ENCODE measurements at regions of chr11 and their contacts with region 1.

Region 1: DNA sequence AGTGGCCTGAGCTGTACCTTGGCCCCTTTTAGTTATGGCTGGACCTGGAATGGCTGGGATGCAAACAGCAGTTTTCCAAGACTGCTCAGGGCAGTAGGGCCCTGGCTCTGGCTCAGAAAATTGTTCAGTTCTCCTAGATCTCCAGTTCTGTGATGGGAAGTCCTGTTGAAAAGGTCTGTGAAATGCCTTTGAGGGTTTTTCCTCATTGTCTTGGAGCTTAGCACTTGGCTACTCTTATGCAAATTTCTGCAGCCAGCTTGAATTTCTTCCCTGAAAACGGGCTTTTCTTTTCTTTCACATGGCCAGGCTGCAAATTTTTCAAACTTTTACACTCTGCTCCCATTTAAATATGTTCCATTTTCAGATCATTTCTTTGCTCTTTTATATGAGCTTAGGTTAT is 33.2 kb downstream of the OR4A15 start:
- DNase-seq: no peak
- ATAC-seq: no peak
- H3K4me3 ChIP-seq: no peak overlapping the region
- H3K27ac ChIP-seq: no peak overlapping the region
- H3K4me1 ChIP-seq: no peaks in the 10 kb centered on the region
- H3K27me3 ChIP-seq: no peaks in the 10 kb centered on the region
- CTCF ChIP-seq: no peak
- POLR2A ChIP-seq: no peak

Region 2: GRCh38 chr11:55349032-55349431 is 52.0 kb before region 1 on chr11:
- intact Hi-C with region 1: loop called in 1 of 10 experiments (anchors 10 kb)
- DNase-seq: no peak
- ATAC-seq: no peak
- H3K4me3 ChIP-seq: no peak overlapping the region
- H3K27ac ChIP-seq: no peak overlapping the region
- H3K4me1 ChIP-seq: no peaks in the 10 kb centered on the region
- H3K27me3 ChIP-seq: no peaks in the 10 kb centered on the region
- CTCF ChIP-seq: no peak
- POLR2A ChIP-seq: no peak

Region 3: DNA sequence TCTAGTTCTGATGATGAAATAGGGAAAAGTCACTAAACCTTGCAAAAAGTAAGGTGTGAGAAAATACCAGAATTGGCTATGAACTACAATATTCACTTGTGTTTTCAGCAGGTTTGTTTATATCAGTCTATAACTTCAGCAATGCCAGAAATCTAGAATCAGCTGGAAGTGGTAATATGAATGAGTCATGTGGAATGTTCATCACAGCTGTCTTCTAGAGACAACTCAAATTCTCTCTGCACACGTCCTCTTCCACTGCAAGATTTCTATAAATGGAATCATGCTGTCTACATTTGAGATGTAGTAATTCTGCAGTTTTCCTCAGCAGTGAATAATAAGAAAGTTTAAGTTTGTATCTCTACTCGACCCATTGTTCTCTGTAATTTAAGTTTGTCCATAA is 56.6 kb after region 1 on chr11:
- intact Hi-C with region 1: loop called in 1 of 10 experiments (anchors 10 kb)
- DNase-seq: no peak
- ATAC-seq: no peak
- H3K4me3 ChIP-seq: no peak overlapping the region
- H3K27ac ChIP-seq: no peak overlapping the region
- H3K4me1 ChIP-seq: no peaks in the 10 kb centered on the region
- H3K27me3 ChIP-seq: no peaks in the 10 kb centered on the region
- CTCF ChIP-seq: no peak
- POLR2A ChIP-seq: no peak

Region 4: DNA sequence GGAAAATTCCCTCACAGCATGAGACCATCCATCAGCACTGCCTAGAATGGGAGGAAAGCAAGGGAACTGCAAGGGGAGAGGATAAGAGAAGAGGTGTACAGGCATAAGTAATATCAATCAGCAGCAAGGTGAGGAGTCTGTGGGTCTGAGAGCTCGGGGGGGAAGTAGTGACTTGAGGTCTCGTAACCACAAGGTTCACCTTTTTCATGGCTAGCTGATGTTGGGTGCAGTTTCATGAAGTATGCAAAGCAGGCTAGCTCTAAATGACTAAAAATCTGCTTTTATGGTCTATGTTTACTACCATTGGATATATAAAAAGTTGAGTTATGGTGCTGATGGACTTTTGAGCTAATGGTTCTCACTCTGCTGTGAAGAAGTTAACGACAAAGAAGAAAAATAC is 296.8 kb after region 1 on chr11:
- intact Hi-C with region 1: no loop called
- DNase-seq: no peak
- ATAC-seq: no peak
- H3K4me3 ChIP-seq: no peak overlapping the region
- H3K27ac ChIP-seq: no peak overlapping the region
- H3K4me1 ChIP-seq: no peaks in the 10 kb centered on the region
- H3K27me3 ChIP-seq: no peaks in the 10 kb centered on the region
- CTCF ChIP-seq: no peak
- POLR2A ChIP-seq: no peak

Region 5: DNA sequence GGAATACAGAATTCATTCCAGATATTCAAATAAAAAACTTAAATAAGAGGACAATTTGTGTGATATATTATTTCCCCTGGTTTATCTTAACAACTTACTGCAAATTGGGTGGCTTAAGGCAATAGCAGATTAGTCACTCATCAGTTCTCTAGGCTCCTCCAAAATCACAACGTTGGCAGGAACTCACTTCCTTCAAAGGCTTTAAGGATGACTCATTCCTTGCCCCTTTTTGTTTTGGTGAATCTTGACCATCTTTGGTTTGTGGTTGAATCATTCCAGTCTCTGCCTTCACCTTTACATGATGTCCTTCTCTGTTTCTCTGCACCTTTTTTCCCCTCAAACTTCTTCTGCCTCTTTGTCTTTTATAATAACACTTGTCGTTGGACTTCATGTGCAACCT is 565.4 kb after region 1 on chr11:
- intact Hi-C with region 1: no loop called
- DNase-seq: no peak
- ATAC-seq: no peak
- H3K4me3 ChIP-seq: no peak overlapping the region
- H3K27ac ChIP-seq: no peak overlapping the region
- H3K4me1 ChIP-seq: no peaks in the 10 kb centered on the region
- H3K27me3 ChIP-seq: no peaks in the 10 kb centered on the region
- CTCF ChIP-seq: no peak
- POLR2A ChIP-seq: no peak